Aorta (tissue), 5 donors: ENCODE measurements at regions of chrX and their contacts with region 1.

Region 1: GRCh38 chrX:13598877-13599276 is 29.5 kb downstream of the EGFL6 start:
- DNase-seq: no peak
- ATAC-seq: no peak
- H3K4me3 ChIP-seq: no peak overlapping the region
- H3K27ac ChIP-seq: no peak overlapping the region
- H3K4me1 ChIP-seq: no peaks in the 10 kb centered on the region
- H3K27me3 ChIP-seq: no peaks in the 10 kb centered on the region

Region 2: DNA sequence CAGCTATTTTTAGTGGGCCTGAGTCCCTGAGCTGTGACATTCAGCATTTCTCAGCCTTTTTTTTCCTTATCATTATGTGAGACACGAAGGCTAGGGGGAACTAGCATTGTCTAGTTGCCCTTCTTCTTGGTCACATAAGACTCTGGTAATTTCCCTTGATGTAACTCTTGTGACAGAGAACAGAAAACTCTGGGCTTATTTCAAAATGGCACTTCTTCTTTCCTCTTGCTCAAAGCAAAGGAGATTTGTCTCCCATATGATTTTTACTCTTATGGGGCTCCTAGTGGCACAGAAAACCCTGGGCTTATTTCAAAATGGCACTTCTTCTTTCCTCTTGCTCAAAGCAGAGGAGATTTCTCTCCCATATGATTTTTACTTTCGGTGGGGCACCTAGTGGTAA is 293.8 kb before region 1 on chrX:
- intact Hi-C with region 1: no loop called
- DNase-seq: no peak
- ATAC-seq: no peak
- H3K4me3 ChIP-seq: no peak overlapping the region
- H3K27ac ChIP-seq: no peak overlapping the region
- H3K4me1 ChIP-seq: no peaks in the 10 kb centered on the region
- H3K27me3 ChIP-seq: no peaks in the 10 kb centered on the region

Region 3: GRCh38 chrX:13502590-13502989 is 96.3 kb before region 1 on chrX:
- intact Hi-C with region 1: no loop called
- DNase-seq: no peak
- ATAC-seq: no peak
- H3K4me3 ChIP-seq: no peak overlapping the region
- H3K27ac ChIP-seq: no peak overlapping the region
- H3K4me1 ChIP-seq: no peaks in the 10 kb centered on the region
- H3K27me3 ChIP-seq: no peaks in the 10 kb centered on the region

Region 4: DNA sequence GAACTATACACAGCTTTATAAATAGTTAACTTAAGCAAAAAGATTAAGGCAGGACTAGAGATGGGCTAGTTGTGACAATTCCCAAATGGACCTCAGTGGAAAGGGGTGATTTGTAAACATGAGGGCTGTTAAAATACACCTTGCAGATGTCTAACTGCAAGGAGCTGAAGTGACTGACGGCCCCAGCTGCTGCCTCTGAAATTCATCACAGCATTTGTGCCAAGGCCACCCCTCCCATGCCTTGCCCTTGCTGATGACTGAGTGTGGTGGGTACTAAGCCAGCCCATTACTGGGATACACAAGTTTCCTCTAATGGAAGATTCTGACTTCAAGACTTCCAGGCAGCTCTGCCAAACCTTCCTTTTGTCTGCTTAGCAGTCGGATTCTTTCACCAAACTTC is 53.2 kb before region 1 on chrX:
- intact Hi-C with region 1: loop called in 1 of 2 experiments (anchors 10 kb)
- DNase-seq: no peak
- ATAC-seq: no peak
- H3K4me3 ChIP-seq: no peak overlapping the region
- H3K27ac ChIP-seq: no peak overlapping the region
- H3K4me1 ChIP-seq: no peaks in the 10 kb centered on the region
- H3K27me3 ChIP-seq: no peaks in the 10 kb centered on the region

Region 5: GRCh38 chrX:13620207-13620606 is 21.3 kb after region 1 on chrX:
- intact Hi-C with region 1: no loop called
- DNase-seq: no peak
- ATAC-seq: no peak
- H3K4me3 ChIP-seq: no peak overlapping the region
- H3K27ac ChIP-seq: no peak overlapping the region
- H3K4me1 ChIP-seq: no peaks in the 10 kb centered on the region
- H3K27me3 ChIP-seq: no peaks in the 10 kb centered on the region

Region 6: GRCh38 chrX:13851996-13852695 is 253.3 kb after region 1 on chrX:
- intact Hi-C with region 1: no loop called
- DNase-seq: no peak
- ATAC-seq: no peak
- H3K4me3 ChIP-seq: no peak overlapping the region
- H3K27ac ChIP-seq: no peak overlapping the region
- H3K4me1 ChIP-seq: no peaks in the 10 kb centered on the region
- H3K27me3 ChIP-seq: no peaks in the 10 kb centered on the region